Caco-2 (cell line): ENCODE measurements at regions of chr17 and their contacts with region 1.

Region 1: GRCh38 chr17:50883850-50884438 is 17.8 kb upstream of the TOB1 start:
- DNase-seq: peak; percentile 71 to 78
- H3K4me3 ChIP-seq: no peak overlapping the region
- H3K4me3 Mint-ChIP-seq: peak overlapping the region; percentile 44
- H3K27ac Mint-ChIP-seq: peak overlapping the region; percentile 96
- H3K4me1 ChIP-seq: peaks cover 47% of the 10 kb centered on the region
- H3K4me1 Mint-ChIP-seq: peaks cover 40% of the 10 kb centered on the region
- H3K27me3 ChIP-seq: no peaks in the 10 kb centered on the region
- H3K27me3 Mint-ChIP-seq: no peaks in the 10 kb centered on the region
- CTCF ChIP-seq: no peak

Region 2: DNA sequence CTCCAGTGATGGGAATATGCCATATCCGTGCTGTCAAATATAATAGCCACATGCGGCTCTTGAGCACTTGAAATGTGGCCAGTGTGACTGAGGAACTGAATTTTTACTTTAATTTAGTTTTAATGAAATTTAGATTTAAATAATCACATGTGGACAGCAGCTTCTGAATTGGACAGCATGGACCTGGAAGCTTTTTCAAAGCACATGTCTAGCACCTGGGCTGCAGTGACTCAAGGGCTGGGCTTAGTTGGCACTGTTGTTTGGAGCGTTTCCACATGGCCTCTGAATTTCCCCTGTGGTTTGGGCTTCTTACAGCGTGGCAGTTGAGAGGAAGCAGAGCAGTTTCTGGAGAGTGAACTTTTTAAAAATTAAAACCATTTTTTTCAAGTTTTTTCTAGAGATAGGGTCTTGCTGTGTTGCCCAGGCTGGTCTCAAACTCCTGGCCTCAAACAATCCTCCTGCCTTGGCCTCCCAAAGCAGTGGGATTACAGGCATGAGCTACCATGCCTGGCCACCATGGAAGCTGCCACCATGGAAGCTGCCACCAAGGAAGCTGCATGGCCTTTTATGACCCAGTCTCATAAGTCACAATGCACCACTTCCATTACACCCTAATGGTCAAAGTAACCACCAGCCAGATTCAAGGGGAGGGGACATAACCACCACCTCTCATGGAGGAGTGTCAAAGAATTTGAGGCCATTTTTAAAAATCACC is 11.1 kb before region 1 on chr17:
- CTCF ChIA-PET with region 1: interaction called, 23 read pairs
- POLR2A ChIA-PET with region 1: interaction called, 296 read pairs
- intact Hi-C with region 1: loop called (anchors 1 kb)
- DNase-seq: no peak
- H3K4me3 ChIP-seq: no peak overlapping the region
- H3K4me3 Mint-ChIP-seq: no peak overlapping the region
- H3K27ac Mint-ChIP-seq: no peak overlapping the region
- H3K4me1 ChIP-seq: peaks cover 8% of the 10 kb centered on the region
- H3K4me1 Mint-ChIP-seq: peaks cover 3% of the 10 kb centered on the region
- H3K27me3 ChIP-seq: no peaks in the 10 kb centered on the region
- H3K27me3 Mint-ChIP-seq: no peaks in the 10 kb centered on the region
- CTCF ChIP-seq: no peak

Region 3: GRCh38 chr17:50918933-50919296 is 35.0 kb after region 1 on chr17:
- CTCF ChIA-PET with region 1: interaction called, 6 read pairs
- POLR2A ChIA-PET with region 1: interaction called, 8 read pairs
- intact Hi-C with region 1: loop called (anchors 2 kb)
- DNase-seq: no peak
- H3K4me3 ChIP-seq: no peak overlapping the region
- H3K4me3 Mint-ChIP-seq: no peak overlapping the region
- H3K27ac Mint-ChIP-seq: no peak overlapping the region
- H3K4me1 ChIP-seq: peaks cover 56% of the 10 kb centered on the region
- H3K4me1 Mint-ChIP-seq: peaks cover 23% of the 10 kb centered on the region
- H3K27me3 ChIP-seq: no peaks in the 10 kb centered on the region
- H3K27me3 Mint-ChIP-seq: no peaks in the 10 kb centered on the region
- CTCF ChIP-seq: no peak

Region 4: GRCh38 chr17:50944054-50944901 is 60.3 kb after region 1 on chr17:
- CTCF ChIA-PET with region 1: interaction called, 9 read pairs
- POLR2A ChIA-PET with region 1: interaction called, 18 read pairs
- intact Hi-C with region 1: loop called (anchors 1 kb)
- DNase-seq: peak; percentile 96 to 98
- H3K4me3 ChIP-seq: peak overlapping the region; percentile 52
- H3K4me3 Mint-ChIP-seq: peak overlapping the region; percentile 73
- H3K27ac Mint-ChIP-seq: peak overlapping the region; percentile 59
- H3K4me1 ChIP-seq: peaks cover 27% of the 10 kb centered on the region
- H3K4me1 Mint-ChIP-seq: peaks cover 29% of the 10 kb centered on the region
- H3K27me3 ChIP-seq: no peaks in the 10 kb centered on the region
- H3K27me3 Mint-ChIP-seq: no peaks in the 10 kb centered on the region
- CTCF ChIP-seq: peak; percentile 53 to 60

Region 5: DNA sequence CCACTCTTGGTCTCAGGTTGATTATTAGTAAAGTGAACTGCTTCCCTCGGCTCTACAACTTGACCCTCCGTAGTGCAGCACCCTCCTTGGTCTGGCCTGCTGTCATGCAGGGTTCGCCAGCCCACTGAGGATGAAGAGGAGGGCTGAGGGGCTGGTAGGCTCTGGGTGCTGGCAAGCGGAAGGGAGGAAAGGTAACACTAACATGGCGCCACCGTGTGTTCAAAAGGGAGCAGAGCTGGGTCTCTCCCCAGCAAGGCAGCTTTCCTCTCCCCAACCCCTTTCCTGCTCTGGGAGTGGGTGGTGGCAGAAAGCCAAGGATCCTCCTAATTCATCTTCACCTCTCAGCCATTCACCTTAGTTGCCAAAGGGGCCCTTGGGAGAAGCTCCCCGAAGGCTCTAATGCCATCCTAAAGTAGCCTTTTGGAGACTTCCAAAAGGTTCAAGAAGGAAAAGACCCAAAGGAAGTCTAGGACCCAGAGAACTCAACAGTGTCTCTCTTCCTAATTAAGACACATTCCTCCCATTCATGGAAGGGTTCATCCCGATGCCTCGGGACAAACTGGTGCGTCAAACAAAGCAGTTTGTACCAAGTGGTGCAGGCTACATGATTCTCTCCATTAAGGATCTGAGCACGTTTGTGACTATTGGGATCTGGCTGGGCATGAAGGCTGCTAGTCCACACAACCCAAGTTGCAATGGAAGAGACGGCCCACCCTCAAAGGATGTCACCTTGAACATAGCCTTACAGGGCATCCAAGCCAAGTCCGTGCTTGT is 73.0 kb after region 1 on chr17:
- CTCF ChIA-PET with region 1: interaction called, 12 read pairs
- POLR2A ChIA-PET with region 1: interaction called, 4 read pairs
- intact Hi-C with region 1: no loop called
- DNase-seq: peak; percentile 86 to 87
- H3K4me3 ChIP-seq: no peak overlapping the region
- H3K4me3 Mint-ChIP-seq: no peak overlapping the region
- H3K27ac Mint-ChIP-seq: no peak overlapping the region
- H3K4me1 ChIP-seq: peaks cover 9% of the 10 kb centered on the region
- H3K4me1 Mint-ChIP-seq: peaks cover 13% of the 10 kb centered on the region
- H3K27me3 ChIP-seq: no peaks in the 10 kb centered on the region
- H3K27me3 Mint-ChIP-seq: no peaks in the 10 kb centered on the region
- CTCF ChIP-seq: peak; percentile 96 to 98